HepG2 (cell line): ENCODE measurements at regions of chr6 and their contacts with region 1.

Region 1: DNA sequence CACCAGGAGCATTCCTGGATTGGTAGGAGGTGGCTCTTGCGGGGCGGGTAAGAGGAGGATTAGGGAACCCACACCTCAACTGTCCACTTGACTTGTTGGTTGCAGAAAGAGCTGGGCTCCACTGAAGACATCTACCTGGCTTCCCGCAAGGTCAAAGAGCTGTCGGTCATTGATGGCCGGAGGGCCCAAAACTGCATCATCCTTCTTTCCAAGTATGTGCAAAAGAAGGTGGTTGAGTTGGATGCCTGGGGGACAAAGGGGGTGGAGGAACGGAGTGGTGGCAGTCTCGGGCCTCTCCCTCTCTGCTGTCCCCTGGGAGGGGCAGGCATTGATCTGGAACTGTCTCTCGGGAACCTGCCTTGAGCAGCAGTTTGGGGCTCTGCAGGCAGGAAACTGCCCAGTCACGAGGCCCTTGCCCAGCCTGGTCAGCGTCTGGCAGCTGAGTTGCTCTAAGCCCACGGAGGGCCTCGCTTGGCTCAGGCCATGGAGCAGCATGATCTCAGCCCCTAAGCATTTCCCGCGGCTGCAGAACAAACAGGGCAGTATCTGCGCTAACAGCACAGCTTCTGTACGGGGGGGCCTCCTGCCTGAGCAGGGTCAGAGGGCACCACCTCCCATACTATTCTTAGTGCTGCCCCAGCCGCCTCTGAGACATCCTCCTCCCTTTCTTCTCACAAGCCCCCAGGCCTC is 46.7 kb downstream of the MOCS1 start:
- DNase-seq: peak; percentile 85
- ATAC-seq: peak; percentile 94
- H3K4me3 ChIP-seq: no peak overlapping the region
- H3K27ac ChIP-seq: no peak overlapping the region
- H3K4me1 ChIP-seq: peaks cover 25% of the 10 kb centered on the region
- H3K27me3 ChIP-seq: peaks cover 0 to 7% of the 10 kb centered on the region in 2 experiments; a peak in 1 of 5 replicates
- CTCF ChIP-seq: no peak; the same call in 1 of the 2 replicates
- EP300 ChIP-seq: peak in 1 of 2 experiments; percentile 6; a peak in 1 of 4 replicates
- POLR2A ChIP-seq: no peak
- RAD21 ChIP-seq: no peak

Region 2: GRCh38 chr6:39361657-39362486 is 525.7 kb before region 1 on chr6:
- CTCF ChIA-PET with region 1: interaction called, 23 read pairs
- POLR2A ChIA-PET with region 1: no interaction called
- in situ Hi-C with region 1: loop called (anchors 10 kb)
- intact Hi-C with region 1: loop called (anchors 1 kb)
- DNase-seq: peak; percentile 45
- ATAC-seq: peak; percentile 95
- H3K4me3 ChIP-seq: no peak overlapping the region
- H3K27ac ChIP-seq: no peak overlapping the region
- H3K4me1 ChIP-seq: no peaks in the 10 kb centered on the region
- H3K27me3 ChIP-seq: no peaks in the 10 kb centered on the region
- CTCF ChIP-seq: peak; percentile 92
- EP300 ChIP-seq: no peak
- POLR2A ChIP-seq: no peak
- RAD21 ChIP-seq: peak; percentile 62; the same call in 1 of the 2 replicates

Region 3: DNA sequence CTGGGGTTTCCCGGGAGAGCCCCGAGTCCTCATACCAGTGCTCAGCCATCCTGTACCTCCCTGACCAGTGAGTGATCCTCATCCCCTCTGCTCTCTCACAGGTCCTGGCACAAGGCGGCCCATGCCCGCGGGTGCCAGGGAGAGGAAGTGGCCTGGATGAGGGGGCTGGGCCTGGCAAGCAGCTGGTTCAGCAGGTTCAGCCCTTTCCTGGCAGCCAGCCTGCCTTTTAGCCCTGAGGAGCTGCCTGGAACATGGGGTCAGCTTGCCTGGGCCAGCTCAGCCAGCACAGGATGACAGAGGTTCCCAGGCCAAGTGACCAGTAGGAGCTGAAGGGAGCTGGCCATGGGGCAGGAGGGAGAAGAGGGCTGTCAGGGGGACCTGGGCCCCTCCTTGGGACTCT is 35.9 kb after region 1 on chr6:
- CTCF ChIA-PET with region 1: no interaction called
- POLR2A ChIA-PET with region 1: no interaction called
- in situ Hi-C with region 1: no loop called
- intact Hi-C with region 1: no loop called
- DNase-seq: no peak
- ATAC-seq: no peak
- H3K4me3 ChIP-seq: no peak overlapping the region
- H3K27ac ChIP-seq: no peak overlapping the region
- H3K4me1 ChIP-seq: peaks cover 1% of the 10 kb centered on the region; the same call in 1 of the 2 replicates
- H3K27me3 ChIP-seq: no peaks in the 10 kb centered on the region
- CTCF ChIP-seq: no peak
- EP300 ChIP-seq: no peak
- POLR2A ChIP-seq: no peak
- RAD21 ChIP-seq: no peak